ENCODE measurements at regions of chr9 and their contacts with region 1.

Region 1: DNA sequence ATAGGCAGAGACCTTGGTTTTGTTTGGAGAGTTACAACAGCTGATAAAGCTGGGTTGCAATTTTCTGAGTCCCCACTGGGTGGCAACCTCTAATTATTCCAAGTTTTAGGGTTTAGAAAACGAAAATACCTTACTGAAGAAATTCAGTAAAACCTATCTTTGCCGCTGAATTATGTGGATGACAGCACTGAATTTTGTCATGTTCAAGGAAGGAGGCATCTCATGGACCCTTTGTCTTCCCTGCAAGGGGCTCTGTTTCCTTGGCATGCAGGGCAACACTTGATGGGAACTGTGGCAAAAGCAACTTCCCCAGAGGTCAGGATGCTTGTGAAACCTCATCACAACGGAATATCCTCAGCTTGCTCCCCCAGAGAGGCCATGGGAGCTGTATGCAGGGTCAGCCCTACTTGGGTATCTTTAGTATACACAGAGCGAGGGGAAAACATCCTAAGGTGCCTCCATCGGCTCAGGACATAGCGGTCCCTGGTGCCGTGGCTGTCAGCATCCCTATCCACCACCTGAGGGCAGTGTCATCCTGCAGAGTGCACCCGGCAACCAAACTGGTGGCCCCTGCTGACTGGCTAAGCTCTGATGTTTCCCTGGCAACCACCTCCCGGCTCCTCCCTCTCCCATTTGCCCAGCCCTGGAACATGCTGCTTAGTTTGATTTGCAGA is 123.1 kb downstream of the RXRA start:
- DNase-seq: peak; percentile 87
- ATAC-seq: peak; percentile 98
- H3K4me3 ChIP-seq: no peak overlapping the region
- H3K27ac ChIP-seq: no peak overlapping the region
- H3K4me1 ChIP-seq: no peaks in the 10 kb centered on the region
- H3K27me3 ChIP-seq: no peaks in the 10 kb centered on the region
- CTCF ChIP-seq: peak; percentile 76

Region 2: DNA sequence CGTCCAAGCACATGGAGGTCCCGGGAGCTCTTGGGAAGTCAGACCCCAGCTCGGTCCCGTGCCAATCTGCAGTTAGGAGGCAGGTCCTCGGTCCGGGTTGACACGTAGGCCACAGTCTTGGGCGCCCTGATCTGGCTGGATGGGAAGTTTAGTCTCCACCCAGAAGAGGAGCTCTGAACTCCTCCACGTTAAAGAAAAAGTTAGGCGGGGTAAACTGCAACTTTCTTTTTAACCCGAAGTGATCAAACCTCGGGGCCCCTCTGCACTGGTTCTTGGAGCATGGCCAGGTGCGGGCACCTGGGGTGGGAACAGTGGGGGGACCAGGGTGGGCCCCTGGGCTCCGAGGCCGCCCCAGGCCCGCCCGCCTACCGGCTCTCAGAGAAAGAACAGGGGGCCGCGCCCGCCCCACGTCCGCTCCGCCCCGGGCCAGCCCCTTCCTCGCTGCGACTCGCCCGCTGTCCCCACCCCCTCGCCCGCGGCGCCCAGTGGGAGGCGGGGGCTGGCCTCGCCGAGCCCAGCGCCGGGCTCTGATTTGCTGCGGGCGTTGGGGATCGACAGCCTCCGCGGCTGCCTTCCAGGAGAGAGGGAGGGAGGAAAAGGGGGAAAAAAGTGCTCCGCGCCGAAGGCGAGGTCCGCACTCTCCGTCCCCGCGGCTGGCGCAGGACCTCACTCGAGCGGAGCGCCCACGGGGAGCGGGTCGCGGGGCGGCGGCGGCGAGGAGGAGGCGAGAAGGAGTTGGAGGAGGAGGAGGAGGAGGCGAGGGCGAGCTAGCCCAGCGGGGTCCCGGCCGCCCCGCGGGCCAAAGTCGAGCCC is 192.0 kb after region 1 on chr9 and contains the start of gene COL5A1:
- CTCF ChIA-PET with region 1: no interaction called
- POLR2A ChIA-PET with region 1: no interaction called
- intact Hi-C with region 1: loop called (anchors 5 kb)
- DNase-seq: peak; percentile 81
- ATAC-seq: peak; percentile 73
- H3K4me3 ChIP-seq: peak within 1 kb of the TSS; percentile 69
- H3K27ac ChIP-seq: no peak within 1 kb of the TSS
- H3K4me1 ChIP-seq: peaks cover 18% of the 10 kb centered on the region
- H3K27me3 ChIP-seq: no peaks in the 10 kb centered on the region
- CTCF ChIP-seq: no peak
- total RNA-seq, gene COL5A1: 10.6 and 15.4 TPM in 2 replicates

Region 3: DNA sequence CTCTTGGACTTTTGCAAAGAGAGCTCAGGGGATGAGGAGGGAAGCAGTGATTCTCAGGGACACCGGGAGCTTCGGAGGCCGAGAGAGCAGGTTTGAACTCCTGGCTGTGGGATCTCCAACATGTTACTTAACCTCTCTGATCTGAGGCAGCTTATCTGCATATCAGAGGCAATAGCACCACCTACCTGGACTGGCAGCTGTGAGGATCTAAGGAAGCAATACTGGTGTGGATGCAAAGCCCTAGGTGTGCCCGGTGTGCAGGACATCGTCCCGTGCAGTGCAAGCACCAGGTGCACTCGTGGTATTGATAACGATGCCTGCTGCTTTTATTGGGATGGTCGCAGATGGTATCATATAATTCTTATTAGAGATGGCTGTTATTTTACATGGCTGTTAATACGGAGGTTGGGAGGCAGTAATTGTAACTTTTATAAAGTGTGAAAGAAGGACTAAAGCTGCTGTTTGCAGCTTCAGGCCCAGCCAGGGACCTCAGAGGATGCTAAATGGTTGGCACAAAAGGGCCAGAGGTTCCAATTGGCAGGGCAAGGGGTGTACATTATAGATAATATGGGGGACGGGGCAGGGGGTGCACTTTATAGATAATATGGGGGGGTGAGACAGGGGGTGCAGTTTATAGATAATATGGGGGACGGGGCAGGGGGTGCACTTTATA is 207.1 kb after region 1 on chr9:
- CTCF ChIA-PET with region 1: interaction called, 3 read pairs
- POLR2A ChIA-PET with region 1: no interaction called
- intact Hi-C with region 1: loop called (anchors 1 kb)
- DNase-seq: peak; percentile 31
- ATAC-seq: peak; percentile 66; the same call in 1 of the 2 replicates
- H3K4me3 ChIP-seq: no peak overlapping the region
- H3K27ac ChIP-seq: no peak overlapping the region
- H3K4me1 ChIP-seq: no peaks in the 10 kb centered on the region
- H3K27me3 ChIP-seq: no peaks in the 10 kb centered on the region
- CTCF ChIP-seq: peak; percentile 42; the same call in 1 of the 2 replicates

Measured in PC-3 (cell line).